ENCODE measurements at regions of chr12 and their contacts with region 1.

Region 1: DNA sequence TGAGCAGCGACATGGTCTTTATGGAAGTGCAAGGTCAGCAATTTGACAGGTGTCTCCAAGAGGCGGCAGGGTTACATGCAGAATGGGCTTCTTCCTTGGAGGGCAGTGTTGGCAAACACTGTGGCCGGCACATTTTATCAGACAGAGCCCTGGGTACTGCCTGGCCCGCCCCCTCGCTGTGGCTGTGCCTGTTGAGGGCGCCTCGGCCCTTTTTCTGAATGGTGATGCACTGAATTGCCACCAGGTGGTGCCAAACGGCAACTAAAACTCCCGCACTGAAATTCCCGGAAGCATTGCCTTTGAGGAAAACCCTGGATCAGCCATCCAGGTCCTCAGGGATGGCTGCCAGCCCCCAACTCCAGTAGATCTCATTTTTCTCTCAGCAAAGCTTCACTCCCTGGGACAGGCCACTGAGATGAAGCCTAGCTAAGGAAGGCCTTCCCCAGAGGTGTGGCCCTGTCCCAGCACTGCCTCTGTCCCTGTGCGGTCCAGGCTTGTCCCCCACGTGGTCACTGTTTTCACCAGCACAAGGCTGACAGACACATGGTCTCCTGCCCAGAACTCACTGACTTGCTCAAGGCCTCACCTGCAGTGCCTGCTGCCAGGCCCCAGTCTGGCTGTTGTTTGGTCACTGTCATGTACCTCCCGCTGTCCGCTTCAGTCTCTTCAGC is 73.6 kb downstream of the TESC start:
- DNase-seq: peak; percentile 47 to 73
- ATAC-seq: peak; percentile 87
- H3K4me3 ChIP-seq: no peak overlapping the region
- H3K27ac ChIP-seq: no peak overlapping the region
- H3K4me1 ChIP-seq: no peaks in the 10 kb centered on the region
- H3K27me3 ChIP-seq: no peaks in the 10 kb centered on the region

Region 2: GRCh38 chr12:117119592-117120198 is 94.1 kb after region 1 on chr12:
- intact Hi-C with region 1: loop called (anchors 2 to 5 kb)
- DNase-seq: peak in 1 of 2 donors; percentile 33
- ATAC-seq: peak; percentile 28
- H3K4me3 ChIP-seq: no peak overlapping the region
- H3K27ac ChIP-seq: no peak overlapping the region
- H3K4me1 ChIP-seq: no peaks in the 10 kb centered on the region
- H3K27me3 ChIP-seq: no peaks in the 10 kb centered on the region

Region 3: GRCh38 chr12:117155278-117156060 is 129.9 kb after region 1 on chr12:
- intact Hi-C with region 1: loop called (anchors 2 to 10 kb)
- DNase-seq: peak; percentile 49 to 83
- ATAC-seq: peak; percentile 47
- H3K4me3 ChIP-seq: no peak overlapping the region
- H3K27ac ChIP-seq: no peak overlapping the region
- H3K4me1 ChIP-seq: no peaks in the 10 kb centered on the region
- H3K27me3 ChIP-seq: no peaks in the 10 kb centered on the region